ENCODE measurements at regions of chr4 and their contacts with region 1.

Region 1: DNA sequence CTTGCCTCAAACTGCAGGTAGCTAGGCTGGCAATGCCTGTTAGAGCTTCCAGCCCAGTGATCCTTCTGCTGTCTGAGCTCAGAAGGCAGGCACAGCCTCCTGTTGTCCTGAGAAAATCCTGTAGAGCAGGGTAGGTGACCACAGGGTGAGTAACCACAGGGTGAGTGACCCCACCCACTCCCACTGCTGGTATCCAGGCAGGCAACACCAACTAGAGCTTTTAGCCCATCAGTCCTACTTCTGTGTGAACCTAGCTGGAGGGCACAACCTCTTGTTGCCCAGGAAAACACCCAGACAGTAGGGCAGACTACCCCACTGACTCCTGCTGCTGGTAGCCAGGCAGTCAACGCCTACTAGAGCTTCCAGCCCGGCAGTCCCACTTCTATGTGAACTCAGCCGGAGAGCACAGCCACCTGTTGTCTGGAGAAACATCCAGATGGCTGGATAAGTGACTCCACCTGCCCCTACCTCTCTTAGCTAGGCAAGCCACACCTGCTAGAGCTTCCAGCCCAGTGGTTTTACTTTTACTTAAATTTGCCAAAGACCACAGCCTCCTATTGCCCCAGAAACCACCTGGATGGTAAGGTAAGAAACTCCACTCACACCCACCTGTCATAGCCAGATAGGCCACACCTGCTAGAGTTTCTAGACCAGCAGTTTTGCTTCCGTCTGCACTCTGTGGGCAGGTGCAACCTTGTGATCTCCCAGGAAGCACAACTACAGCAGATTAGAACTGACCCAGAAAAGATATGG is 371.6 kb downstream of the INPP4B start:
- DNase-seq: peak; percentile 93 to 98
- H3K4me3 ChIP-seq: peak overlapping the region; percentile 74; the same call in 1 of the 2 replicates
- H3K27ac ChIP-seq: peak overlapping the region; percentile 100
- H3K4me1 ChIP-seq: peaks cover 57% of the 10 kb centered on the region
- H3K27me3 ChIP-seq: no peaks in the 10 kb centered on the region
- CTCF ChIP-seq: no peak

Region 2: DNA sequence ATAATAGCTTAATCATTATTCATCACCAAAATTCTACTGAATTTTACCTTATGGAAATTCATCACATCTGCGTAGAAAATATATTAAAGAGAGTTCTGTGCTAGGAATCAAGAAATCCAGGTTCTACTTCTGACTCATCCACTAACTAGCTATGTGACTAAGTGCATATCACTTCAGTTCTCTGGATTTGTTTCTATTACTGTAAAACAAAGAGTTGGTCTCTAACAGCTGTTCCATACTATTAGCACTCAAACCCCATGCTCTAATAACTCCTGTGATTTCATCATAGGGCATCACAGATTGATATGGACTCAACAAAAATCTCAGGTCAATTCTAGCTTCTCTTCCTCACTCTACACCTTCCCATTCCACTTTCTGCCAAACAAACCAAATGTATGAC is 200.4 kb before region 1 on chr4:
- CTCF ChIA-PET with region 1: no interaction called
- POLR2A ChIA-PET with region 1: no interaction called
- intact Hi-C with region 1: loop called (anchors 2 kb)
- DNase-seq: peak in 1 of 2 experiments; percentile 57
- H3K4me3 ChIP-seq: no peak overlapping the region
- H3K27ac ChIP-seq: peak overlapping the region; percentile 47
- H3K4me1 ChIP-seq: peaks cover 18% of the 10 kb centered on the region
- H3K27me3 ChIP-seq: no peaks in the 10 kb centered on the region
- CTCF ChIP-seq: no peak

Region 3: GRCh38 chr4:142405021-142405694 is 69.4 kb before region 1 on chr4:
- CTCF ChIA-PET with region 1: interaction called, 8 read pairs
- POLR2A ChIA-PET with region 1: interaction called, 29 read pairs
- intact Hi-C with region 1: loop called (anchors 1 kb)
- DNase-seq: no peak
- H3K4me3 ChIP-seq: no peak overlapping the region
- H3K27ac ChIP-seq: peak overlapping the region; percentile 100
- H3K4me1 ChIP-seq: peaks cover 68% of the 10 kb centered on the region
- H3K27me3 ChIP-seq: no peaks in the 10 kb centered on the region
- CTCF ChIP-seq: no peak

Region 4: DNA sequence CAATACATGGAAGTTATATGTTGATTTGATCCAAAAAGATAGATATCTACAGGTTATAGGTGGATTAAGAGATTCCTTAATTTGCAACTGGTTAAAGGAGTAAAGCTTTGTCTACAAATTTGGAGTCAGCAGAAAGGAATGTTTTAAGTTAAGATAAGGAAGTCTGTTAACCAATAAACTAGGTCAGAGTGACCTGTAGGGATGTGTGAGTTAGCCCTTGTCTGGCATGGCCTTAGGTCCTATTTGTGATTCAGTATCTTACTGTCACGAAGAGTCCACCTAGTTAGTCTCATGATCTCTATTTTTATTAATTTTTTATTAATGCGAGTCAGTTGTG is 140.8 kb after region 1 on chr4:
- CTCF ChIA-PET with region 1: no interaction called
- POLR2A ChIA-PET with region 1: no interaction called
- intact Hi-C with region 1: loop called (anchors 1 kb)
- DNase-seq: peak; percentile 15 to 92
- H3K4me3 ChIP-seq: peak overlapping the region; percentile 32; the same call in 1 of the 2 replicates
- H3K27ac ChIP-seq: peak overlapping the region; percentile 92
- H3K4me1 ChIP-seq: peaks cover 35% of the 10 kb centered on the region
- H3K27me3 ChIP-seq: no peaks in the 10 kb centered on the region
- CTCF ChIP-seq: no peak

Region 5: DNA sequence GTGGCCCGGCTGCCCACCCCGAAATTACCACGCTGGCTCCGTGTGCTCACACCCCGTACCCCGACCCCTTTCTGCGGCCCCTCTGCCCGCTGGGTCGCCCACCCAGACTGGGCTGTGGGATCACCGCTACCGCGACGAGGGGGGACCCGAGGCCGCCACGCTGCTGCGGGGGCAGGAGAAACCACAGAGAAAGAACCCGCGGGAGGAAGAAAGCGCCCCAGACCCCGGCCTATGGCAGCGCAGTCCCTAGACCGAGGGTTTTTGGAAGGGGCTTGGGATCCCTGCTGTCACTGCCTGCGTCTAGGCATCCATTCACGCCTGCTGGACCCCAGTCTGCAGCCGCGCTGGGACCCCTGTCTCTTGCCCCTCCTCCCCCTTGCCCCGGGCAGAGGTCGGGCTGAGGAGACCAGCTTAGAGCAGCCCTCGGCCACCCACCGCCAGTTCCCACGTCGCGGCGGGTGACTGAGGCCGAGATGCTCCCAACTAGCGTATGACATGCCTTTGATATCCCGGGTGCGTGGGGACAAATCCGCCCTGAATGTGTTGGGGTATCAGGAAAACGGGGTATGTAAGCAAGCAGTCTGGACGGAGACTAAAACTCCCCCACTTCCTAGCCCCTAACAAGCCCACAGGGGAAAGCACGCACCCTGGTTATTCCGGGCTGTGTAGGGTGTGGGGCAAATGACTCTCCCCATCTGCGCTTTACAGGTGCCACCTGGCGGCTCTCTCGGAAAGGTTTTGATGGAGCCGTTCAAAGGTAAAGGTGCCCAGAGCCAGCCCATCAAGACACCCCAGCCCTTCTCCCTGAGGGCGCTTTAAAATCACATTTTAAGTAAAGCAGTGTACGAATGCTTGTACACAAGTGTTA is 372.5 kb after region 1 on chr4:
- CTCF ChIA-PET with region 1: no interaction called
- POLR2A ChIA-PET with region 1: interaction called, 6 read pairs
- intact Hi-C with region 1: loop called (anchors 1 kb)
- DNase-seq: peak; percentile 59 to 73
- H3K4me3 ChIP-seq: peak overlapping the region; percentile 91
- H3K27ac ChIP-seq: no peak overlapping the region
- H3K4me1 ChIP-seq: peaks cover 22% of the 10 kb centered on the region
- H3K27me3 ChIP-seq: no peaks in the 10 kb centered on the region
- CTCF ChIP-seq: peak; percentile 72

Region 6: DNA sequence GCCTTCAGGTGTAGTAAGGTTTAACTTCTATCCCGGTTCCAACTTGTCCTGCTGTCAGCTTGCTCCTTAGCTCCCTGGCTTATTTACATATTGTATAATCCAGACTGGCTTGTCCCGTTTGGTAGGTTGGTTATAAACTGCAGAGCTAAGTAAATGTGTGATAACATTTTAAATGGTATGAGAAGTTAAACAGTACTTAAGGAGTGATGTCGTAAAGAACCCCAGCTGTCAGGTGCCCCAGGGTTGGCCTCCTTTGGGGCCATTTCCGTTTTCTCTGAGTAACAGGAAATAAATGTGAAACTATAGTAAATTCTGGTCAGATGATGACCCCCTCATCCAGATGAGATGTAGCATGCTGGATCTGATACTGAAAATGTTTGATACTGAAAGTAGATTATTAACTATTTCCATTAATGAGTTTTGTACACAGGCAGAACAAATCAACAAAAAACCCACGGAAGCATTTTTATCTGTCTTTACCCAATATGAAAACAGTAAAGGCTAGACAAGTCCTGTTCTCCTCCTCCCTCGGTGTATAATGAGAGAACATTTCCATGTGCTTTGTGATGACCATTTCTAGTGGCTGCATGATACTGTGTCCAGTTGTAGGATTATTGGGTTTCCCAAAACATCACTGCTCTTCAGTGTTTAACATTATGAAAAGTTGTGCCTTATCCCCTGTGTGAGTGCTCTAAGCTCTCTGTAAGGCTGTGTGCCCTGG is 884.6 kb after region 1 on chr4:
- CTCF ChIA-PET with region 1: no interaction called
- POLR2A ChIA-PET with region 1: no interaction called
- intact Hi-C with region 1: loop called (anchors 10 kb)
- DNase-seq: peak; percentile 56 to 88
- H3K4me3 ChIP-seq: no peak overlapping the region
- H3K27ac ChIP-seq: peak overlapping the region; percentile 87
- H3K4me1 ChIP-seq: peaks cover 54% of the 10 kb centered on the region
- H3K27me3 ChIP-seq: no peaks in the 10 kb centered on the region
- CTCF ChIP-seq: no peak